Activated CD4-positive, alpha-beta memory T cell treated with anti-CD3 and anti-CD28 coated beads for 36 hours (primary cell): ENCODE measurements at regions of chr4 and their contacts with region 1.

Region 1: GRCh38 chr4:6716018-6716911 is at the start of gene BLOC1S4:
- DNase-seq: peak; percentile 92
- H3K4me3 Mint-ChIP-seq: peak within 1 kb of the TSS; percentile 90
- H3K27ac Mint-ChIP-seq: peak within 1 kb of the TSS; percentile 97
- H3K4me1 Mint-ChIP-seq: peaks cover 27% of the 10 kb centered on the region
- H3K27me3 Mint-ChIP-seq: peaks cover 3% of the 10 kb centered on the region
- total RNA-seq, gene BLOC1S4: 17.0 to 19.7 TPM

Region 2: DNA sequence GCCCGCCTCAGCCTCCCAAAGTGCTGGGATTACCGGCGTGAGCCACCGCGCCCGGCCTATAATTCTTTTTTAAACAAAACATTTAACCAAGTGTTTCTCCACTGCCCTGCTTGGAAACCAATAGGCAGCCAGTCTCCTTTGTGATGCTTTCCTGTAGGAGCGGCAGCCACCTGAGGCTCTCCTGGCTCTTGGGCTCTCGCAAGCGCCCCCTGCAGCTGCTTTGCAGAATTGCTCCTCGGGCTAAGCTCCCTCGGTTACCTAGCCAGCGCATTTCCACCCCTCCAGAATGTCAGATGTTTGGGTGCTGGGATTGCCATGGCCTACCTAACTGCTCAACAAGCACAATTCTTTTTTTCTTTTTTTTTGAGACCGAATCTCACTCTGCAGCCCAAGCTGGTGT is 14.9 kb before region 1 on chr4:
- CTCF ChIA-PET with region 1: interaction called, 10 read pairs
- POLR2A ChIA-PET with region 1: no interaction called
- intact Hi-C with region 1: no loop called
- DNase-seq: peak; percentile 70
- H3K4me3 Mint-ChIP-seq: no peak overlapping the region
- H3K27ac Mint-ChIP-seq: no peak overlapping the region
- H3K4me1 Mint-ChIP-seq: peaks cover 73% of the 10 kb centered on the region
- H3K27me3 Mint-ChIP-seq: no peaks in the 10 kb centered on the region

Region 3: DNA sequence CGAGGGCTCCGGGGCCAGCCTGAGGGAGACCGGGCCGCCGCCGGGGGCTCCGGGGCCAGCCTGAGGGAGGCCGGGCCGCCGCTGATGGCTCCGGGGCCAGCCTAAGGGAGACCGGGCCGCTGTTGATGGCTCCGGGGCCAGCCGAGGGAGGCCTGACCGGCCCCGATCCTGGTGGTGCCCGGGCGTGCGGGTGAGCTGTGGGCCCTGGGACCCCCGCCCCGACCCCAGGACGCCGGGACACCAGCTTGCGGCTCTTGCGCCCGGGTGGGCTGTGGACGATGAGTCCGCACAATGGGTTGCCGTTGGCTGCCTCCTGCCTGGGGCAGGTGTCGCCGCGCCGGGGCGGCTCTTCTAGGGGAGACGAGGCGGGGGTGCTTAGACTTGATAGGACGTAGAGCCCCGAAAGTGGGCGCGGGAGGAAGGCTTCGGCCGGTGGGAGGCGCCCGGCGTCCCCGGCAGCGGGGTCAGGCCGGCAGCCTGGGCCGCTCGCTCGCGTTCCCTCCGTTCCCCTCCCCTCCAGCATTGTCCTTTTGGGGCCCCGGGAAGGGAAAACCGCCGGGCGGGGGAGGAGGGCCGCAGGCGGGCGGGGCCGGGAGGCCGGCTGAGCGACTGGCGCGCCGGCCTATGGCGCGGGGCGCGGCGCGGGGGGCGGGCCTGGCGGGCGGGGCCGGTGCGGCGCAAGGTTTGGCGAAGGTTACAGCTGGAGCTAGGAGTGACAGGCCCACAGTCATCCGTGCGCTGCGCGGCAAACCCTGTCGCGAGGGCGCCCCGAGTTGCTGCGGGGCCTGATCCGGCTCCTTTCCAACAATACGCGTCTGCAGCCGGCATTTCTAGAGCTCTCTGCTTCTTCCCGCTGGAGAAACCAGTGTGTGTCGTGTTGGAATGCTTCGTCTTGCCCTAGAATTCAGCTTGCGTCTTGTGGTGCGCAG is 67.1 kb after region 1 on chr4:
- CTCF ChIA-PET with region 1: interaction called, 9 read pairs
- POLR2A ChIA-PET with region 1: no interaction called
- intact Hi-C with region 1: loop called (anchors 1 kb)
- DNase-seq: peak; percentile 94
- H3K4me3 Mint-ChIP-seq: peak overlapping the region; percentile 80
- H3K27ac Mint-ChIP-seq: peak overlapping the region; percentile 77
- H3K4me1 Mint-ChIP-seq: peaks cover 47% of the 10 kb centered on the region
- H3K27me3 Mint-ChIP-seq: no peaks in the 10 kb centered on the region

Region 4: DNA sequence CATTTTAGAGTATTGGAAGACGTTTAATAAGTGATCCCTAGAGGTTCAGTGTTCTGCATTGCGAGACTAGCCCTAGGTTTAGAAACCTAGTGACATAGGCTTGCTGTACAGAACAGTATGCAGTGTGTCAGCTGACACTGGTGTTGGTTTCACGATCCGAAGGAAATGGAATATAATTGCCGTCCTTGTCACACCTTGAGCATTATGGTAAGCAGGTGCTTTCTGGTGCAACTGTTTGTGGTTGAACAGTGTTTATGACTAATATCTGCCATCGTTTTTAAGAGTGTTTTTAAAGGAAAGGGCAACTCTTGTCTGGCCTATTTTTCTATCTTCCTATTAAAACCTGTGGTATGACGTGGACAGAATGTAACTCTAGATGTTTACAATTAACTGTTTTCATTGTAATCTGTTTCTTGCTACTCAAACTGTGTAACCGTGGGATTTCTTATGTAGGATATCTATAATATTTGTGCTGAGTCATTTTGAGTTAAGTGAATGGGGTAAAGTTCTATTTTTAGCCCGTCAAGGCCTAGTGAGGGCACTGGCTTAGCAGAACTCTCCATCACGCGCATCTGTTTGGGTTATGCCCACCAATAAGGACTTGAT is 139.5 kb after region 1 on chr4:
- CTCF ChIA-PET with region 1: interaction called, 10 read pairs
- POLR2A ChIA-PET with region 1: no interaction called
- intact Hi-C with region 1: loop called (anchors 1 kb)
- DNase-seq: peak; percentile 59
- H3K4me3 Mint-ChIP-seq: peak overlapping the region; percentile 36
- H3K27ac Mint-ChIP-seq: peak overlapping the region; percentile 90
- H3K4me1 Mint-ChIP-seq: peaks cover 35% of the 10 kb centered on the region
- H3K27me3 Mint-ChIP-seq: no peaks in the 10 kb centered on the region

Region 5: DNA sequence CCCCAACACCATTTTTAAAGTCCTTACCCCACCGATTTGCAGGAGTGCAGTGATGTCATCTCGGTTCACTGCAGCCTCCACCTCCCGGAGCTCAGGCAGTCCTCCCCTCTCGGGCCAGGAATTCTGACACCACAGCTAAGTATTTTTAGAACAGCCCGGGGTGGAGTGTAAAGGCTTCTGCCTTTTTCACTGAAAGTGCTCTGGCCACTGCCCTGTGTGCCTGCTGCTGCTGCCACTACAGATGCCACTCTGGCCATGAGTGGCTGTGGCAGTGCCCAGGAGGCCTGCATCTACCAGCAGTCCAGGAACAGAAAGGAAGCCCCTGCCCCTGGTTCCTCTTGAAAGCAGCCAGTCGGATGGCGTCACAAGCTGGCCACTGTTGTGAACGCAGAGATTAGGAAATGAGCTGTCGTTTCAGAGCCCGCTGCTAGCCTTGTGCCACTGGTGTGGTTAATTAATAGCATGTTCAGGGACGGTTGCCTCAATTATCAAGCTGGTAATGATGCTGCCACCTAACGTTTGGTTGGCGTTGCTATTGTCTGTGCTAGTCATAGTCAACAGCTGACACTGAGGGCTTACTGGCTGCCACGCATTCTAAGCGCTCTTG is 169.8 kb after region 1 on chr4:
- CTCF ChIA-PET with region 1: interaction called, 13 read pairs
- POLR2A ChIA-PET with region 1: no interaction called
- intact Hi-C with region 1: no loop called
- DNase-seq: peak; percentile 33
- H3K4me3 Mint-ChIP-seq: no peak overlapping the region
- H3K27ac Mint-ChIP-seq: no peak overlapping the region
- H3K4me1 Mint-ChIP-seq: peaks cover 2% of the 10 kb centered on the region
- H3K27me3 Mint-ChIP-seq: no peaks in the 10 kb centered on the region

Region 6: GRCh38 chr4:7110546-7110945 is 394.3 kb after region 1 on chr4:
- CTCF ChIA-PET with region 1: no interaction called
- POLR2A ChIA-PET with region 1: no interaction called
- intact Hi-C with region 1: no loop called
- DNase-seq: no peak
- H3K4me3 Mint-ChIP-seq: no peak overlapping the region
- H3K27ac Mint-ChIP-seq: no peak overlapping the region
- H3K4me1 Mint-ChIP-seq: no peaks in the 10 kb centered on the region
- H3K27me3 Mint-ChIP-seq: no peaks in the 10 kb centered on the region